SK-N-SH (cell line): ENCODE measurements at regions of chr17 and their contacts with region 1.

Region 1: DNA sequence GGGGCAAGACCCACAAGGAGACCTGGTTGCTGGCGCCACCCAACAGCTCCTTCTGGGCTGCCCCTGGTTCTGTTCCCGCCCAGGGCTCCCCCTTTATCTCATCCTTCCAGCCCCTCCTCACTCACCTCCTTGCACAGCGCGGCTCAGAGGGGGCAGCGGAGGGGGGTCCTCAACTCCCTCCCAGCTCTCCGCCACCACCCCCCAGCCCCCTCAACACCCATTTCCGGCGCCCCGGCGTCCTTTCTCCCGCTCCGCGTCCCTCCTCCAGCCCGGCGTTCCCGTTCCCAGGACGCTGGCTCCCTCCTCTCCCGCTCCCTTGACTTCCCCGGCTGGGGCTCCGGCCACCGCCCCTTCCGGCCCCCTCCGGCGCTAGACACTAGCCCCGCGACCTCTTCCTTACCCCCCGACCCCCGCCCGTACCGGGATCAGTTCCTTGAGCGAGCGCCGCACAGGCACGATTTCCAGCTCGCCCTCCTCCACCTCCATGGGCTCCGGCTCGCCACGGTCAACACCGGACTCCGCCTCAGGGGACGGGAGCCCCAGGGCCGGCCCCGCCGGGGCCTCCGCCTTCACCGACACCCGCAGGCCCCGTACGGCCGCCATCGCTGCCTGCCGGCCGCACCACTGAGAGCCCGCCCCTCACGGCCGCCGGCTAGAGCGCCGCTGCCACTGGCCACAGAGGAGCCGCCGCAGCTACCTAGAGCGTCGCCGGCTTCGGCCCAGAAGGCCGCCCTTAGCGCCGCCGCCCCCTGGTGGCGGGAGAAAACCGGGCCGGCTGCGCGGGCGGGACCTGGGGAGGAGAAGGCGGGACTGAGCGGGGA is at the start of gene NCBP3:
- DNase-seq: peak; percentile 98
- H3K4me3 ChIP-seq: peak within 1 kb of the TSS; percentile 85 to 96
- H3K27ac ChIP-seq: peak within 1 kb of the TSS; percentile 83 to 89
- H3K4me1 ChIP-seq: peaks cover 3 to 9% of the 10 kb centered on the region in 2 experiments; a peak in 3 of 4 replicates
- H3K27me3 ChIP-seq: no peaks in the 10 kb centered on the region
- CTCF ChIP-seq: peak; percentile 81
- EP300 ChIP-seq: peak in 1 of 2 experiments; percentile 44; a peak in 1 of 4 replicates
- RAD21 ChIP-seq: no peak
- polyA plus RNA-seq, gene NCBP3: 6.5 and 9.5 TPM in 2 replicates

Region 2: DNA sequence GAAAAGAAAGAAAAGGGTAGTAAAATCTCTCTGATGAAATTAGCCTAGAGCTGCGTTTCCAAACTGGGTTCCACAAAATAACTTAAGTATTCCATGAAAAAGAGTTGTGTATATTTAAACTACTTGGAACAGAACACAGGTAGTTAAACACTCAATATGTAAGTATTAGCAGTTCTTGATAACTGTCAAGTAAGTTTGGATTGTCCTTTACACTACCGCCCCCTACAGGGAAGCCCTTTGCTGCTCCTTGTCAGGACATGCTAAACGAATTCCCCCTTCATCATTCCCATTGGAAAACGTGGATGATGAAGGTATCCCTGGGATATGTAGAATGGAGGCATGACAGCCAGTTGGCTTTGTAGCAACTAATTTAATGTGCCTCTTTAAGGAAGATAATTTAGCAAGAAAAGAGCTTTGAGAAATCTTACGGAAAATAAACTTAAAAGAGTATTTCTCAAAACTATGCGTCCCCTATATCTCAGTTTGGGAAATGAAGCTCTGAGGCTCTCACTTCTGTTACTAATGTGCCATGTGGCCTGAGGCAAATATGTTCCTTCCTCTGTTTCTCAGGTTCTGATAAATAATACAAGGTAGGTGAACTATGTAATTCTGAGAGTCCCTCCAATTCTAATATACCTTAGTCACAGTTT is 18.6 kb before region 1 on chr17:
- CTCF ChIA-PET with region 1: interaction called, 37 read pairs
- POLR2A ChIA-PET with region 1: interaction called, 3 read pairs
- DNase-seq: peak; percentile 61
- H3K4me3 ChIP-seq: no peak overlapping the region
- H3K27ac ChIP-seq: no peak overlapping the region
- H3K4me1 ChIP-seq: no peaks in the 10 kb centered on the region
- H3K27me3 ChIP-seq: no peaks in the 10 kb centered on the region
- CTCF ChIP-seq: peak; percentile 86
- EP300 ChIP-seq: no peak
- RAD21 ChIP-seq: peak; percentile 69

Region 3: GRCh38 chr17:3857121-3858100 is 11.6 kb after region 1 on chr17:
- CTCF ChIA-PET with region 1: interaction called, 74 read pairs
- POLR2A ChIA-PET with region 1: interaction called, 5 read pairs
- DNase-seq: peak; percentile 21
- H3K4me3 ChIP-seq: no peak overlapping the region
- H3K27ac ChIP-seq: no peak overlapping the region
- H3K4me1 ChIP-seq: no peaks in the 10 kb centered on the region
- H3K27me3 ChIP-seq: no peaks in the 10 kb centered on the region
- CTCF ChIP-seq: no peak
- EP300 ChIP-seq: no peak
- RAD21 ChIP-seq: no peak

Region 4: GRCh38 chr17:3865176-3865575 is 19.3 kb after region 1 on chr17:
- CTCF ChIA-PET with region 1: interaction called, 74 read pairs
- POLR2A ChIA-PET with region 1: no interaction called
- DNase-seq: no peak
- H3K4me3 ChIP-seq: no peak overlapping the region
- H3K27ac ChIP-seq: no peak overlapping the region
- H3K4me1 ChIP-seq: no peaks in the 10 kb centered on the region; a peak in 1 of 4 replicates
- H3K27me3 ChIP-seq: no peaks in the 10 kb centered on the region
- CTCF ChIP-seq: no peak
- EP300 ChIP-seq: no peak
- RAD21 ChIP-seq: no peak

Region 5: DNA sequence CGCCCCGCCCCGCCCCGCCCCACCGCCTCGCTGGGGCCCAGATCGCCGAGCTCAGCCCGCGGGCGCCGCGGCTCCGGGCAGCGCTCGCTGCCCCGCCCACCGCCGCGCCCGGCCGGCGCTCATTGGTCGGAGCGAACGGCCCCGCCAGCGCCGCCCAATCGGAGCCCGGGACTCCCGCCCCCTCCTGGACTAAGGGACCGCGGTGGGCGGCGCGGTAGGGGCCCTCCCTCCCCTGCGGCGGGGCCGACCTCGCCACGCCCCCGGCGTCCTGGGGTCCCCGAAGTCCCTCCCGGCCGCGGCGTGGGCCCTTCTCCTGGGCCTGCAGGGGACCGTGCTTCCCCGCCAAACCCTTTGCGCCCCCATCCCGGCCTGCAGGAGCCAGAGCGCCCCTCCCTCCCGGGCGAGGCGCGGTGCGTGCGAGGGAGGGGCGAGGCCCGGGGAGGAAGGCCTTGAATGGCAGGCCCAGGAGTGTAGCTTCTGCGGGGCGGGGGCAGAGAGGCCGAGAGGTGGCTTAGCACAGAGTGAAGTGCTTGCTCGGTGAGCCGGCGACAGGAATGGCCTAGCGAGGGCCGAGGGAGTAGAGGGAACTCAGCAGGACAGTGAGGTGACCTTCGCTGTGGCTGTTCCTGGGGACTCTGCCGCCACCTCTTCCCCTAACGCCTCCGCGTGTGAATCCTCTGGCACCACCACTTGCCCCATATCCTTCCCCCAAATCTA is 47.3 kb after region 1 on chr17 and contains the start of gene CAMKK1:
- CTCF ChIA-PET with region 1: interaction called, 14 read pairs
- POLR2A ChIA-PET with region 1: no interaction called
- DNase-seq: peak; percentile 99
- H3K4me3 ChIP-seq: peak within 1 kb of the TSS; percentile 70 to 74
- H3K27ac ChIP-seq: peak within 1 kb of the TSS in 1 of 2 experiments; percentile 72; a peak in 1 of 4 replicates
- H3K4me1 ChIP-seq: peaks cover 9 to 39% of the 10 kb centered on the region in 2 experiments; a peak in 3 of 4 replicates
- H3K27me3 ChIP-seq: no peaks in the 10 kb centered on the region
- CTCF ChIP-seq: no peak
- EP300 ChIP-seq: no peak
- RAD21 ChIP-seq: no peak
- polyA plus RNA-seq, gene CAMKK1: 6.8 and 8.1 TPM in 2 replicates

Region 6: GRCh38 chr17:4074831-4075495 is 229.1 kb after region 1 on chr17:
- CTCF ChIA-PET with region 1: interaction called, 11 read pairs
- POLR2A ChIA-PET with region 1: no interaction called
- DNase-seq: peak; percentile 61
- H3K4me3 ChIP-seq: no peak overlapping the region; a peak in 1 of 4 replicates
- H3K27ac ChIP-seq: no peak overlapping the region
- H3K4me1 ChIP-seq: no peaks in the 10 kb centered on the region
- H3K27me3 ChIP-seq: no peaks in the 10 kb centered on the region
- CTCF ChIP-seq: peak; percentile 81
- EP300 ChIP-seq: no peak
- RAD21 ChIP-seq: peak; percentile 79